GM13977 (cell line): ENCODE measurements at regions of chr12 and their contacts with region 1.

Region 1: DNA sequence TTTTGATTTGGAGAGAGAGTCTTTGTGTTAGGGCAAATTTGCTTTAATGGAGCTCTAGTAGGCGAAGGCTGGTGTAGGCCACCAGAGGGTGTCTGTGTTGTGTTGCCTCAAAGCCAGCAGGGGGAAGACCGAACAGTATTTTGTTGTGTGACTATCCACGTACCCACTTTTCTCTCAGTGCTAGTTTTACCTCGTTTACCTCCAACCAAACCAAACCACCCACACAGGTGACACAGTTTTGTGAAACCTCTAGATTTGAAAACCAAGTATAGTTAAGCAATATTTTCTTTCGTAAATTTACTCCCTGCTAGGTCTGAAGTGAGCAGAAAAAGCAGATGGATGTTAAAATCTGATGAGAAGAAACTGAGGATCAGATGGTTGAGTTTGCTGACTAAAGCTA is 36.3 kb upstream of the NPFF start:
- DNase-seq: peak; percentile 79
- CTCF ChIP-seq: peak; percentile 86

Region 2: GRCh38 chr12:53675651-53676453 is 132.3 kb after region 1 on chr12 and contains the start of gene ATP5MC2:
- in situ Hi-C with region 1: loop called (anchors 5 kb)
- DNase-seq: peak; percentile 96
- CTCF ChIP-seq: peak; percentile 99

Region 3: DNA sequence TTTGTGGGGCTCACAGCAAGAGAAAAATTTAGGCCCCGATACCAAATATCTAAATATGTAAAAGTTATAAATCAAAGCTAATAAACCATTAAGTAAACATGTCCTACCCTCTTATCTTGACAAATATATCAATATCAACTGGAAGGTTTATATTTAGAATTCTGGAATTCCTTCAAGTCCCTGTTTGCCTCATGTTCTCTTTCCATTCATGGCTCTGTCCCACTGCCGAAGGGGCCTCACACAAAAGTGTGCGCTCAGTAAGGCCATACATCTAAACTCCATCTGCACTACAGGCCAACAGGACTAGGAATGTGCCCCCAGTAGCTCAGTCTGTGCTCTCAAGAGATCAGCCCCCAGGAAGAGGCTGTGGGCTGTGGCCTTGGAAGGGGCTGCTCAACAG is 142.9 kb after region 1 on chr12:
- in situ Hi-C with region 1: no loop called
- DNase-seq: no peak
- CTCF ChIP-seq: no peak